Activated naive CD4-positive, alpha-beta T cell treated with anti-CD3 and anti-CD28 coated beads, Interleukin-2, amount 10 ng/mL, durations not matched to agents 7 days and 5 days (primary cell): ENCODE measurements at regions of chr20 and their contacts with region 1.

Region 1: DNA sequence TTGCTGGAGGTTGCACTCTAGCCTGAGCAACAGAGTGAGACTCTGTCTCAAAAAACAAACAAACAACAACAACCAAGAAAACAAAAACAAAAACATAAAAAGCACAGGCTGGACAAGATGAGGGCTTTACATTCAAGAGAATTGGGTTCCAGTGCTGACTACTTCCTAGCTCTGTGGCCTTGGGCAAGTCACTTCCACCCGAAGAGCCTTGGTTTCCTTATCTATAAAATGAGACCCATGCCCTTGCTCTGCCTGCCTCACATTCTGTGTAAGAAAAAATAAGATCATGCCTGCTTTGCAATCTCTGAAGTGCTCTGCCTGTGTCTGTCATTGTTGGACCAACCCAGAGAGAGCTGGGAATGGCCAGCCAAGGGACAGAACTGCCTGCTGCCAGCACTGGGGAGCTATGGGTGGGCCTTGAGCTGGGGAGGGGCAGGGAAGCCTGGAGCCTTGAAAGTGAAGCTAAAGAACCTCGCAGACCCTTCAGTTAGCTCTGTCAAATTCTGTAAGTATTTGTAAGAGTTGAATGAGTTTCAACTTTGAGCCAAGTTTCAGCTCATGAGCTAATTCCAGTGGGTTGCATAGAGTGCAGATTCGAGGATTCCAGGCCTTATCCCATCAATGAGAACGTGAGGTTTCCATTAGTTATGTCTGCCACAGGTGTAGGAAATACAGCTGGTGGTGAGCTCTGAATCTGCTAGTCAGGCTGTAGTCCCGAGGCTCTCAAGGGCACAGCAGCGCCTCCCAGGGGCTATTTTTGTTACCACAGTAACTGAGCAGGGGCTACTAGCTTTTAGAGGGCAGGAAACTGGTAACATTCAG is 93.2 kb downstream of the DLGAP4 start:
- DNase-seq: peak; percentile 68
- H3K4me3 Mint-ChIP-seq: no peak overlapping the region
- H3K27ac Mint-ChIP-seq: no peak overlapping the region
- H3K4me1 Mint-ChIP-seq: no peaks in the 10 kb centered on the region
- H3K27me3 Mint-ChIP-seq: peaks cover 43% of the 10 kb centered on the region

Region 2: DNA sequence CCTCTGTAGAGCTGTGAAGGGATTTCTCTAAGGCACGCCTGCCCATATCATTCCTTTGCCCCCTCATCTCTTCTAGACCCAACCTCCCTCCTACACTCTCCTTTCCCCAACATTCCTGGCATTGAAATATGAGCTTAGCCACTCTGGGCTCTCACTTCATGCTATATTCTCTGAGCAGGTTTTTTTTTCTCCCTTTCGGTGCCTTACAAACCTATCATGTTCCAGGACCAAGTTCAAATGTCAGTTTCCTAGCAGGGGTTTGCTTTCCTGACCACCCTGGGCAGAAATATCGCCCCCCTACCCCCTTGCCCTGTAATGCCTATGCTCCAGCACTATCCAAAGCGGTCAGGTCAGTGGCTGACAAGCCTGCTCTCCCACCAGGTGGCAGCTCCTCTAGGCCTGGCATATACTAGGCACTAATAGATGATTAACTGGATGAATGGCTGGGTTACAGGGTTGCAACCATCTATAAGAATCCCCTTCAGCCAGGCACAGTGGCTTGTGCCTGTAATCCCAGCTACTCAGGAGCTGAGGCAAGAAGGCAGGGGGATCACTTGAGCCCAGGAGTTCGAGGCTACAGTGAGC is 188.8 kb before region 1 on chr20:
- CTCF ChIA-PET with region 1: interaction called, 14 read pairs
- DNase-seq: no peak
- H3K4me3 Mint-ChIP-seq: no peak overlapping the region
- H3K27ac Mint-ChIP-seq: no peak overlapping the region
- H3K4me1 Mint-ChIP-seq: no peaks in the 10 kb centered on the region
- H3K27me3 Mint-ChIP-seq: peaks cover 12% of the 10 kb centered on the region

Region 3: DNA sequence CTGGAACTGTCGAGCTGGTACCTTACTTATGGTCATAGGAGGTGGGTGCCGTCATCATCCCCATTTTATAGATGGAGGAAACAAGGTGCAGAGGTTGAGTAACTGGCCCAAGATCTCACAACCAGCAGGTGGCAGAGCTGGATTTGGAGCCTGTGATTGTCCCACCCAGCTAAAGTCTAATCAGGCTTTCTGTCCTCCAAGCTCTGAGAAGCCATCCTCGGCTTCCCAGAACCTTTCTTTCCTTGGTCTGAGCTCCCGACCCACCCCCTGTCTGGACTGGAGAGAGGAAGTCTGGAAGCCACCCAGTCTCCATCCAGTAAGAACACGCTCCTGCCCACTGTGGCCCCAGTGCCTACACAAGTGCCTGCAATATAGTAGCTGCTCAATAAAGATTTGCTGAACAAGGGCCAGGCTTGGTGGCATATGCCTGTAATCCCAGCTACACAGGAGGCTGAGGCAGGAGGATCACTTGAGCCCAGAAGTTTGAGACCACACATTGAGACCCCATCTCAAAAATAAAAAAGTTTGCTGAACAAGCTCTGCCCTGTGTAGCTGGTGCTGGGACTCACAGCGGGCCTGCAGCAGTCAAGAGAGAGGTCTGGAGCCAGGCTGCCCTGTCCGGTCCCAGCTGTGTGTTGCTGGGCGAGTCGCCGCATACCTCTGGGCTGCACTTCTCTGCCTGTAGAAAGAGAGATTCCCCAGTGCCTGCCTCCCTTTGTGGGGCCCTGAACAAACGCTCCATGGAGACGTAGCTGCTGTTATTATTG is 125.8 kb before region 1 on chr20:
- CTCF ChIA-PET with region 1: interaction called, 11 read pairs
- DNase-seq: peak; percentile 40
- H3K4me3 Mint-ChIP-seq: no peak overlapping the region
- H3K27ac Mint-ChIP-seq: no peak overlapping the region
- H3K4me1 Mint-ChIP-seq: no peaks in the 10 kb centered on the region
- H3K27me3 Mint-ChIP-seq: peaks cover 20% of the 10 kb centered on the region